ENCODE measurements at regions of chr2 and their contacts with region 1.

Region 1: GRCh38 chr2:161223139-161223732 is 63.0 kb downstream of the TANK start:
- DNase-seq: no peak
- ATAC-seq: peak; percentile 44
- H3K4me3 Mint-ChIP-seq: no peak overlapping the region
- H3K27ac Mint-ChIP-seq: no peak overlapping the region
- H3K4me1 Mint-ChIP-seq: no peaks in the 10 kb centered on the region
- H3K27me3 Mint-ChIP-seq: no peaks in the 10 kb centered on the region

Region 2: GRCh38 chr2:161208527-161209139 is 14.6 kb before region 1 on chr2:
- CTCF ChIA-PET with region 1: interaction called, 20 read pairs
- POLR2A ChIA-PET with region 1: no interaction called
- intact Hi-C with region 1: no loop called
- DNase-seq: no peak
- ATAC-seq: no peak
- H3K4me3 Mint-ChIP-seq: no peak overlapping the region
- H3K27ac Mint-ChIP-seq: no peak overlapping the region
- H3K4me1 Mint-ChIP-seq: peaks cover 7% of the 10 kb centered on the region
- H3K27me3 Mint-ChIP-seq: no peaks in the 10 kb centered on the region

Region 3: GRCh38 chr2:161238560-161239325 is 15.5 kb after region 1 on chr2:
- CTCF ChIA-PET with region 1: interaction called, 45 read pairs
- POLR2A ChIA-PET with region 1: no interaction called
- intact Hi-C with region 1: no loop called
- DNase-seq: peak; percentile 79
- ATAC-seq: peak; percentile 55
- H3K4me3 Mint-ChIP-seq: peak overlapping the region; percentile 76
- H3K27ac Mint-ChIP-seq: peak overlapping the region; percentile 81
- H3K4me1 Mint-ChIP-seq: peaks cover 54% of the 10 kb centered on the region
- H3K27me3 Mint-ChIP-seq: no peaks in the 10 kb centered on the region

Region 4: DNA sequence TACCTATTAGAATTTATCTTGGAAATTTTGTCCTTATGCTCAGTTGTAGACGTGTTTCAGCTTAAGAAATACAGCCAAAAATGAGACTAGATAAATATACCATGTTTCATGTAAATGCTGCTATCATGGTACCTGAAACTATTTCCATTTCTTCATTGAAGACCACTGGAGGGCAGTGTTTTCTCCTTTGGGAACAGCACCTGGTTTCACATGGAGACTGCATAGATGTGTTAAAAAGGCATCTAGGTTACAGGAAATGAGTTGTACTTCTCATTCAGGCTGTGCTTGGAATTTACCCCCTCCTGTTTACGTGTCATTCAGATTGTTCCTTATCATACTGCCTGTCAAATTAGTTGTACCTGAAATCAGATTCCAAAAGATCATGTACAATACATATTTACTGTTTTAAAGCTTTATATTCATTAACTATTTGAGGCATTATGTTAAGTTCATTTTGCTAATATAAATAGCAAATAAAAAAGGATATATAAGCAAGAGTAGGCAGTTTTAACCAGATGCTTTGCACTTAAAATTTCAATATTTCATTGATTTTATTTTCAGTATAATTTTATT is 27.7 kb after region 1 on chr2:
- CTCF ChIA-PET with region 1: interaction called, 19 read pairs
- POLR2A ChIA-PET with region 1: no interaction called
- intact Hi-C with region 1: no loop called
- DNase-seq: no peak
- ATAC-seq: peak; percentile 69
- H3K4me3 Mint-ChIP-seq: no peak overlapping the region
- H3K27ac Mint-ChIP-seq: no peak overlapping the region
- H3K4me1 Mint-ChIP-seq: peaks cover 19% of the 10 kb centered on the region
- H3K27me3 Mint-ChIP-seq: no peaks in the 10 kb centered on the region

Region 5: GRCh38 chr2:161265874-161266273 is 42.6 kb after region 1 on chr2:
- CTCF ChIA-PET with region 1: interaction called, 39 read pairs
- POLR2A ChIA-PET with region 1: no interaction called
- intact Hi-C with region 1: no loop called
- DNase-seq: no peak
- ATAC-seq: no peak
- H3K4me3 Mint-ChIP-seq: no peak overlapping the region
- H3K27ac Mint-ChIP-seq: no peak overlapping the region
- H3K4me1 Mint-ChIP-seq: no peaks in the 10 kb centered on the region
- H3K27me3 Mint-ChIP-seq: peaks cover 6% of the 10 kb centered on the region

Region 6: GRCh38 chr2:161436411-161436810 is 213.2 kb after region 1 on chr2:
- CTCF ChIA-PET with region 1: no interaction called
- POLR2A ChIA-PET with region 1: no interaction called
- intact Hi-C with region 1: no loop called
- DNase-seq: no peak
- ATAC-seq: no peak
- H3K4me3 Mint-ChIP-seq: no peak overlapping the region
- H3K27ac Mint-ChIP-seq: no peak overlapping the region
- H3K4me1 Mint-ChIP-seq: no peaks in the 10 kb centered on the region
- H3K27me3 Mint-ChIP-seq: peaks cover 42% of the 10 kb centered on the region

Measured in activated CD4-positive, alpha-beta T cell treated with anti-CD3 and anti-CD28 coated beads for 36 hours (primary cell).